Common myeloid progenitor, CD34-positive (primary cell): ENCODE measurements at regions of chr4 and their contacts with region 1.

Region 1: GRCh38 chr4:155953151-155954114 is at the start of gene CTSO:
- DNase-seq: peak; percentile 83 to 89 (median 88)
- H3K4me3 ChIP-seq: peak within 1 kb of the TSS; percentile 84 to 99 (median 94)
- H3K27ac ChIP-seq: peak within 1 kb of the TSS; percentile 77 to 93
- H3K4me1 ChIP-seq: peaks cover 0 to 6% (median 4%) of the 10 kb centered on the region in 4 experiments
- H3K27me3 ChIP-seq: no peaks in the 10 kb centered on the region

Region 2: DNA sequence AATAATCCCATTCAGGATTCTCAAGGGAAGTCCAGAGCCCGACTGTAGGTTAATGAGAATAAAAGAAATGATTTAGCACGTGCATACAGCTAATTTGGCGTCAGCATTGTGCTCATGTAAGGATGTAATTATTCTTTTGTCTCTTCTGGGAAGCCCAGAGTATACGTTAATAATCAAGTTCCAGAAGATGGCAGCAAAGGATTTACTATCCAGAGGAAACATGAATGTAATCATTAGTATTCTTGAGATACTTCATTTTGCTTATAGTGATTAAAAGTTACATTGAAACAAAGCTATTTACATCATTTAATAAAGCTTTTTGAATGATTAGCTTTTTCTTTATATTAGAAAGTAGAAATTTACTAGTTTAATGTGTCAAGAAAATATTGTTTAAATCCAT is 549.5 kb before region 1 on chr4:
- CTCF ChIA-PET with region 1: interaction called, 11 read pairs
- POLR2A ChIA-PET with region 1: no interaction called
- DNase-seq: peak; percentile 57 to 79 (median 77)
- H3K4me3 ChIP-seq: no peak overlapping the region
- H3K27ac ChIP-seq: no peak overlapping the region
- H3K4me1 ChIP-seq: no peaks in the 10 kb centered on the region
- H3K27me3 ChIP-seq: no peaks in the 10 kb centered on the region

Region 3: DNA sequence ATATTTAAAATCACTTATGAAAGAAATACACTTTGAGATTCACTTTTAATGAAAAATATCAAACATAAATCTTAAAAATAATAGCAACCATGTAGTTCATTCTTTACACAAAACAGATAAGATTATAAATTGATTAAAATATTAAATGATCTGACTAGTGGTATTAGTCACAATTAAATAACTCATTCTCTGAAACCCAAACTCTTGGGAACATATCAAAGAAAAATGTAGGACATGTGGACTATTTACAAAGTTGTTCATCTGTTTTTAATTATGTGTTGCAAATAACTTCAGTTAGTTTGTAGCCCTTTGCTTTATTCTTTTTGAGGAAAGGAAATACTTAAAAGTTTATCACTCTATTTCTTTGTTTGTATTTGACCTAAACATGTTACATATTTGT is 296.3 kb before region 1 on chr4:
- CTCF ChIA-PET with region 1: no interaction called
- POLR2A ChIA-PET with region 1: no interaction called
- DNase-seq: no peak
- H3K4me3 ChIP-seq: no peak overlapping the region
- H3K27ac ChIP-seq: no peak overlapping the region
- H3K4me1 ChIP-seq: peaks cover 1 to 16% (median 8%) of the 10 kb centered on the region in 4 experiments
- H3K27me3 ChIP-seq: no peaks in the 10 kb centered on the region

Region 4: GRCh38 chr4:155809835-155810234 is 143.6 kb before region 1 on chr4:
- CTCF ChIA-PET with region 1: interaction called, 27 read pairs
- POLR2A ChIA-PET with region 1: no interaction called
- DNase-seq: peak; percentile 75 to 86 (median 84)
- H3K4me3 ChIP-seq: no peak overlapping the region
- H3K27ac ChIP-seq: no peak overlapping the region
- H3K4me1 ChIP-seq: peaks cover 0 to 4% (median 0%) of the 10 kb centered on the region in 4 experiments
- H3K27me3 ChIP-seq: no peaks in the 10 kb centered on the region